HEK293T (cell line): ENCODE measurements at regions of chr17 and their contacts with region 1.

Region 1: GRCh38 chr17:58692239-58693055 is at the start of gene RAD51C:
- DNase-seq: peak; percentile 88

Region 2: DNA sequence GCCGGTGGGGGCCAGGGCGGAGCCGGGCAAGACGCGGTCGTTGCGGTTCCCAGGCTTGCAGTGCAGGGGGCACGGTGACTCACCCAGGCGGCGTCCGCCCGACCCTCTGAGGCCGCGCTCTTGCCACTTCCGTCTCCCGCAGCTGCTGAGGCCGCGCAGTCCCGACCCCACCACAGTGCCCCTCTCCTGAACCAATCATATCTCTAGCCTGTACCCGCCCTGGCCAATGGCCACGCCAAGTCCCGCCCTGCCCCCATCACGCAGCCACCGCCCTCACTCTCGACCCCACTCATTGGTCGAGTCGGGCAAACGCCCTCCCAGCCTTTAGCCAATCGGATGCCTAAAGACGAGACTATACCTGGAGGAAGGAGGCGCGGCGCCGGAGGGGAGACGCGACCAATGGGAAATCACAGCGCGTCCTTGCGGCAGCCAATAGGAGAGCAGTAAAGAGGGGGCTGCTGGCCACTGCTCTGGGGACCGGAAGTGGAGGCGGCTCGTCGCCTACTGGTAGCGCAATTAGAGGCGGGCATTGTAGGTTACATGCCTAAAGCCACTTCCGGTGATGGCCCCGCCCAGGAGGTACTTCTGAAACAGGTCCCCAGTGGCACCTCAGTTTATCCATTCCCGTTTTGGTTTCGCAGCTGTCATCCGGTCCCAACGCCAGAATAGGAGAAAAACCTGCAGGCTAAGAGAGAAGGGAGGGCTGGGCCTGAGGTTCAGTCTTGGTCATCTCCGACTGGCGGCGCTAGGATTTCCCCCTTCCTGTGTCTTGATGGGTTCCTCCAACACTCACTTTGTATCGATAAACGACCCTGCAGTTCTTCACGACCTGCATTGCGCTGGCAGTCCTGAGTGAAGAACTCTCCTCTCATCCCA is 174.5 kb before region 1 on chr17:
- CTCF ChIA-PET with region 1: no interaction called
- POLR2A ChIA-PET with region 1: interaction called, 14 read pairs
- DNase-seq: peak; percentile 95

Region 3: GRCh38 chr17:58669853-58670252 is 22.6 kb before region 1 on chr17:
- CTCF ChIA-PET with region 1: no interaction called
- POLR2A ChIA-PET with region 1: interaction called, 11 read pairs
- DNase-seq: no peak

Region 4: DNA sequence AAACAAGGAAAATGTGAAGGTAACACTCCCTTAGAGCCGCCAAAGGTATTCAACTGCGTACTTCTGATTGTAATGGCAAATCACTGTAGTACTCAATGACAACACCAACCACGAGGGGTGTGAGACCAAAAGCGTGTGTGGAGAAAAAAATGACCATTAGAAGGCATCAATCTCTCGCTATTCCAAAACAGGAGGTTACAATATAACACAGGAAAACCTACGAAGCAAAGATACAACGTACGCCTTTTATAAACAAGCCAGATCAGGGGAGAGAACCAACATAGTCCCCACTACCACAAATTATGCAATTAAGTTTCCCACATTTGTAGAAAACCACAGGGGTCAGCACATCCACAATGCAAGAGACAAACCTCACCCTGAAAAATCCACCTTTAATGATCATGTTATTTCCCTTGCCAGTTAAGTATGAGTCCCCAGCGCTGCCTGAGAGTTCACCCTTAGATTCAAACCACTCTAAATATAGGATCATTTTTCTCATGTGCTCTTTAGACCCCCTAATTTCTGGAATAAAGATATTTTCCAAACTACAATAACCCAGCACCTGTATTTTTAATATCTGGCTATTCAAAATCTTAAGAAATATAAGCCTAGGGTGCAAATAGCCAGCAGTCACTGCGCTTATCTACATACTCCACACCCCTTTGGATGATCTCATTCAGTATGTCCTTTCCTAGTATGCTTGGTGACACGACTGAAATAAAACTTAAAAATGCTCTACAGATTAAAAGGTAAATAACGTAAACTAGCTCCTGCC is 13.0 kb before region 1 on chr17:
- CTCF ChIA-PET with region 1: no interaction called
- POLR2A ChIA-PET with region 1: interaction called, 14 read pairs
- DNase-seq: peak; percentile 71

Region 5: DNA sequence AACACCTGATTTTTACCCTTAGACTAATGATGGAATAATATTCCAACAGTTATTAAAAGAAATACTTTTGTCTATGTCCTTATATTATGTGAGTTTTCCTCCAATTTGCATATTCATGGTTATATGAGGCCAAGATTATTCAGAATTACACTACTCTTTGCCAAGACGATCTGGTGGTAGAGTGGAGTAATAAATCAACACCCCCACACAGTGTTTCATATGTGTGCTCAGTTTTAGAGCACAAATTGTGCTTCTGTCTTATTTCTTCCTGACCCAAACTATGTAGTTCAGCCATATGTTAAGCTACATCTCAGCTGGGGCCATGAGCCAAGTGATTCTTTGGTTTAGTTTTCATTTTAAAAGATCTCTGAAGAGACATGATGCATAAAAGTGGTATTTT is 36.3 kb after region 1 on chr17:
- CTCF ChIA-PET with region 1: no interaction called
- POLR2A ChIA-PET with region 1: no interaction called
- DNase-seq: no peak